ENCODE measurements at regions of chr3 and their contacts with region 1.

Region 1: GRCh38 chr3:52225452-52226228 is at the start of gene TLR9:
- DNase-seq: peak in 3 of 9 experiments; percentile 30 to 53 (median 52)
- ATAC-seq: peak; percentile 45
- H3K4me3 ChIP-seq: peak within 1 kb of the TSS in 1 of 2 experiments; percentile 14
- H3K4me3 Mint-ChIP-seq: peak within 1 kb of the TSS; percentile 58
- H3K27ac ChIP-seq: peak within 1 kb of the TSS; percentile 24 to 49
- H3K27ac Mint-ChIP-seq: peak within 1 kb of the TSS; percentile 80
- H3K4me1 ChIP-seq: peaks cover 66% of the 10 kb centered on the region
- H3K4me1 Mint-ChIP-seq: peaks cover 68% of the 10 kb centered on the region
- H3K27me3 ChIP-seq: no peaks in the 10 kb centered on the region
- H3K27me3 Mint-ChIP-seq: no peaks in the 10 kb centered on the region
- CTCF ChIP-seq: no peak
- total RNA-seq, gene TLR9: 0.33 TPM in 1 of 2 experiments, not detected in the other

Region 2: GRCh38 chr3:52171514-52172261 is 54.0 kb before region 1 on chr3:
- CTCF ChIA-PET with region 1: no interaction called
- POLR2A ChIA-PET with region 1: no interaction called
- intact Hi-C with region 1: no loop called
- DNase-seq: no peak
- ATAC-seq: no peak
- H3K4me3 ChIP-seq: no peak overlapping the region
- H3K4me3 Mint-ChIP-seq: no peak overlapping the region
- H3K27ac ChIP-seq: no peak overlapping the region
- H3K27ac Mint-ChIP-seq: no peak overlapping the region
- H3K4me1 ChIP-seq: no peaks in the 10 kb centered on the region
- H3K4me1 Mint-ChIP-seq: no peaks in the 10 kb centered on the region
- H3K27me3 ChIP-seq: no peaks in the 10 kb centered on the region
- H3K27me3 Mint-ChIP-seq: no peaks in the 10 kb centered on the region
- CTCF ChIP-seq: no peak

Region 3: GRCh38 chr3:52278510-52279069 is 53.0 kb after region 1 on chr3 and contains the start of gene WDR82:
- CTCF ChIA-PET with region 1: interaction called, 622 read pairs
- POLR2A ChIA-PET with region 1: interaction called, 26 read pairs
- intact Hi-C with region 1: no loop called
- DNase-seq: peak; percentile 94 to 99 (median 98)
- ATAC-seq: peak; percentile 77
- H3K4me3 ChIP-seq: peak within 1 kb of the TSS; percentile 65 to 95
- H3K4me3 Mint-ChIP-seq: peak within 1 kb of the TSS; percentile 94
- H3K27ac ChIP-seq: peak within 1 kb of the TSS; percentile 79 to 93
- H3K27ac Mint-ChIP-seq: peak within 1 kb of the TSS; percentile 99
- H3K4me1 ChIP-seq: peaks cover 49% of the 10 kb centered on the region
- H3K4me1 Mint-ChIP-seq: peaks cover 72% of the 10 kb centered on the region
- H3K27me3 ChIP-seq: no peaks in the 10 kb centered on the region
- H3K27me3 Mint-ChIP-seq: no peaks in the 10 kb centered on the region
- CTCF ChIP-seq: peak; percentile 36
- total RNA-seq, gene WDR82: 115 to 117 TPM